Naive thymus-derived CD4-positive, alpha-beta T cell (primary cell): ENCODE measurements at regions of chr2 and their contacts with region 1.

Region 1: DNA sequence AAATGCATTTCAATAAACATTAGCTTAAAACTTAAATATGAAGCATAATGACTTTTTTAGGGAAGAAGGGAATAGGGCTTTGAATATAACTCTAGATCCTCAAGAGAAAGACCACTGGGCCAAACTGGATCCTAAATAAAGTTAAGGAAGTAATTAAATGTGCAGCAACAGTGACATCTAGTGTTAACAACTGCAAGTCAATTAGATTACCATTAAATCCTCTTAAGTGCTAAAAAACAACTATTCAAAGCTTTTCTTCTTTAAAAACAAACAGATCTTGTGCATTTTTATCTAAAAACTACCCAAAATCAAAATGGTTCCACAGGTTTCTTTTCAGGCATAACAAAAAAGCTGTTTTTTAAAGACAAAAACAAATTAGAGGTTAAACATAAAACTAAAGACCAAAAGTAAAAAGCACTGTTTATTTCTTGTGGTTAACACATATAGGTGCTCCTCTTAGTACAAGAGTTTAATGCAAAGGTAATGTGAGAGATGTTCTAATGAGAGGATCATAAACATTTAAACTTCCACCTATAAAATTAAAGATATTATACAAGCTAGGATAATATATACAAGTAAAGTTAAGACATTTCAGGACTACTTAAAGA is 111.4 kb downstream of the THADA start:
- DNase-seq: peak in 7 of 9 donors; percentile 15 to 56 (median 47)
- ATAC-seq: peak; percentile 58
- H3K4me3 ChIP-seq: no peak overlapping the region
- H3K4me3 Mint-ChIP-seq: no peak overlapping the region
- H3K27ac ChIP-seq: no peak overlapping the region
- H3K27ac Mint-ChIP-seq: no peak overlapping the region
- H3K4me1 ChIP-seq: peaks cover 0 to 21% of the 10 kb centered on the region in 2 donors
- H3K4me1 Mint-ChIP-seq: peaks cover 0 to 15% (median 0%) of the 10 kb centered on the region in 7 donors
- H3K27me3 ChIP-seq: no peaks in the 10 kb centered on the region
- H3K27me3 Mint-ChIP-seq: no peaks in the 10 kb centered on the region

Region 2: DNA sequence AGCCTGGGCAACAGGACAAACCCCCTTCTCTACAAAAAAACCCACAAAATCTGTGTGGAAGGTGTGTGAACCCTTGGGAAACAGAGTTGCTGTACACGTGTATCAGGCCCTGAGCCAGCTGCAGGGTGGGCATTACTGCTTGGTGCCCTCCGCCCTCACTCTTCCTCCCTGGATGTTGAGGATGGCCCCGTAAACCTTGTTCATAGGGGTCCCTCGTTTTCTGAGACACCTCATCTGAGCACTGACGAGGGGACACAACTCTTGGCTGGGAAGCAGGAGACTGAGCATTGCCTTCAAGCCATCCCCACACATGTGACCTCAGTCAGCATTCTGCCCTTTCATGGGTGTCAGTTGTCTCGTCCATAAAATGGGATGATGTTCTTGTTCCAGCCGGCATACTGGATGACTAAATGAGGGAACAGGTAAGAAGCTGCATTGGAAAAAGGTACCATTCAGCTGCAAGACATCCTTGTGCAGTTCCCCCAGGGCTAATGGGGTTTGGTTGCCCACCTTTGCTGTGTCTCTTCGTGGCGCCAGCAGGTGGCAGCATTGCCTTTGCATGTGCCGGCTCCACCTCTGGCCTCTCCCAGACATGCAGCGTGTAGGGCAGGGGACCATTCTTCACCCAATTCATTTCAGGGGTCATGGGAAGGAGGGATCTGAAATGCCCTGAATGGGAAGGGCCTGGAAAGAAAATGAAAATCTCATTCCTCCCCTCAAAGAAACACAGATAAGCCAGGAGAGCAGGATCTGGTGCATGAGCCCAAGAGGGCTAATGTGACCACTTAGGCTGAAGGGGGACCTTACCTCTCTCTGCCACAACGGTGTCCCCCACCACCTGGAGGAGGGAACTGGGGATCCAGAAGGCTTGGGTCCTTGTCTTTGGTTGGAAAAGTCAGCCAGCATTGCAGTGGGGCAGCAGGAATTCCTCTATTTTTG is 655.7 kb before region 1 on chr2:
- CTCF ChIA-PET with region 1: interaction called, 10 read pairs
- POLR2A ChIA-PET with region 1: no interaction called
- intact Hi-C with region 1: loop called (anchors 1 to 5 kb)
- DNase-seq: peak; percentile 44 to 69 (median 63)
- ATAC-seq: peak; percentile 93
- H3K4me3 ChIP-seq: no peak overlapping the region
- H3K4me3 Mint-ChIP-seq: peak overlapping the region in 6 of 10 donors; percentile 18 to 47 (median 21)
- H3K27ac ChIP-seq: no peak overlapping the region
- H3K27ac Mint-ChIP-seq: peak overlapping the region in 2 of 9 donors; percentile 21 to 25
- H3K4me1 ChIP-seq: peaks cover 3 to 6% of the 10 kb centered on the region in 2 donors
- H3K4me1 Mint-ChIP-seq: peaks cover 7 to 19% (median 14%) of the 10 kb centered on the region in 7 donors
- H3K27me3 ChIP-seq: no peaks in the 10 kb centered on the region
- H3K27me3 Mint-ChIP-seq: peaks cover 0 to 8% (median 5%) of the 10 kb centered on the region in 5 donors

Region 3: DNA sequence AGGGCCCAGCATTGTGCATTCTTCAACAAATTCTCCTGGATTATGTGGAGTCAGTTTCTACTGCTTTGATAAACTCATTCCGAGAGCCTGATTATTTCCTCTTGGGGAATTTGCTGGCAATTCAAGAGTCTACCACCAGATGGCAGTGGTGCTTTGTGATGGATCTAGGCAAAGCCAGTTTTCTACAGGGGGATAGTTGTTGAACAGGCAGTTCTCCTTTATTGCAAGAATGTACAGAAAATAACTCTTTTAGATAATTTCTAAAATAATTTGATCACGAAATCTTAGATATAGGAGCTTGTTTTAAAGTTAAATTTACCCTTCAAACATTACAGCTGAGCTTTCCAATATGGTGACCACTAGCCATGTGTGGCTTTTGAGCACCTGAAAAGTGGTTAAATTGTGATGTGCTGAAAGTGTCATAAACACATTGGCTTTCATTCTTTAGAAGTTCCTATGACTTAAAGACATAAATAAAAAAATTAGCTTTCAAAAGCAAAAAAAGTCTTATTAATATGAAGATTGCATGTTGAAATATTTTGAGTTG is 625.3 kb before region 1 on chr2:
- CTCF ChIA-PET with region 1: interaction called, 13 read pairs
- POLR2A ChIA-PET with region 1: no interaction called
- intact Hi-C with region 1: loop called (anchors 1 to 2 kb)
- DNase-seq: peak; percentile 15 to 75 (median 58)
- ATAC-seq: peak; percentile 72
- H3K4me3 ChIP-seq: no peak overlapping the region
- H3K4me3 Mint-ChIP-seq: no peak overlapping the region
- H3K27ac ChIP-seq: no peak overlapping the region
- H3K27ac Mint-ChIP-seq: no peak overlapping the region
- H3K4me1 ChIP-seq: no peaks in the 10 kb centered on the region
- H3K4me1 Mint-ChIP-seq: peaks cover 0 to 4% (median 0%) of the 10 kb centered on the region in 7 donors
- H3K27me3 ChIP-seq: no peaks in the 10 kb centered on the region
- H3K27me3 Mint-ChIP-seq: peaks cover 0 to 3% (median 0%) of the 10 kb centered on the region in 5 donors

Region 4: DNA sequence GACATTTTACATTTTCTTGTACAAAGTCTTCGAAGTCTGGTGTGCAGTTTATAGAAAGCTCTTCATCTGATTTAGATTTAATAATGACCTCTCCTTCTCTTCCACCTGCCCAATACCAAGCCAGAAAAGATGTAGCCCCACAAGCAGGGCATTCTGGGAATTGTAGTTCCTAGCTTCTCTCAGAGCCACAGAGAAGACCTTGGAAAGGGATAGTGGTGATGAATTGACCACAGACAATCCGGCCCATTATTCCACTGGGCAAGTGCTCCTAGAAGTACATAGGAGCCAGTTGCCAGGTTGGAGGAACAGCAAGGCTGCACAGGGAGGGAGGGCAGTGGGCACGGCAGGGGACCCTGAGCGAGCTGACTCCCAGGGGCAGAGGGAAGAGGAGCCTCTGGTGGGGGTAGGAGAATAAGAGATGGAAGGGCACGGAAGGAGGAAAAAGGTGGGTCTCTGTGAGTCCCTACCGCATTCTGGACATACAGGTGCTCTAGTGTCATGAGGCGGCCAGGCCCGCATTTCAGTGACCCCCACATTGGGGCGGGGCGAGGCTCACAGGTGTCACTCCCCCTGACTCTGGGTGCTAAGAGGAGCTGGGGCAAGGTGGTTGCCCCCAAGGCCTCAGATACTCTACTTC is 539.5 kb before region 1 on chr2:
- CTCF ChIA-PET with region 1: interaction called, 57 read pairs
- POLR2A ChIA-PET with region 1: interaction called, 4 read pairs
- intact Hi-C with region 1: loop called (anchors 1 kb)
- DNase-seq: no peak
- ATAC-seq: no peak
- H3K4me3 ChIP-seq: no peak overlapping the region
- H3K4me3 Mint-ChIP-seq: no peak overlapping the region
- H3K27ac ChIP-seq: no peak overlapping the region
- H3K27ac Mint-ChIP-seq: no peak overlapping the region
- H3K4me1 ChIP-seq: no peaks in the 10 kb centered on the region
- H3K4me1 Mint-ChIP-seq: peaks cover 0 to 7% (median 5%) of the 10 kb centered on the region in 7 donors
- H3K27me3 ChIP-seq: no peaks in the 10 kb centered on the region
- H3K27me3 Mint-ChIP-seq: peaks cover 0 to 8% (median 0%) of the 10 kb centered on the region in 5 donors

Region 5: GRCh38 chr2:42974721-42975717 is 509.4 kb before region 1 on chr2:
- CTCF ChIA-PET with region 1: interaction called, 8 read pairs
- POLR2A ChIA-PET with region 1: no interaction called
- intact Hi-C with region 1: loop called (anchors 1 kb)
- DNase-seq: peak; percentile 25 to 64 (median 47)
- ATAC-seq: peak; percentile 70
- H3K4me3 ChIP-seq: no peak overlapping the region
- H3K4me3 Mint-ChIP-seq: no peak overlapping the region
- H3K27ac ChIP-seq: no peak overlapping the region
- H3K27ac Mint-ChIP-seq: peak overlapping the region in 3 of 9 donors; percentile 25 to 74 (median 41)
- H3K4me1 ChIP-seq: peaks cover 0 to 6% of the 10 kb centered on the region in 2 donors
- H3K4me1 Mint-ChIP-seq: peaks cover 12 to 19% (median 16%) of the 10 kb centered on the region in 7 donors
- H3K27me3 ChIP-seq: no peaks in the 10 kb centered on the region
- H3K27me3 Mint-ChIP-seq: peaks cover 0 to 10% (median 0%) of the 10 kb centered on the region in 5 donors

Region 6: GRCh38 chr2:43024515-43025011 is 459.9 kb before region 1 on chr2:
- CTCF ChIA-PET with region 1: no interaction called
- POLR2A ChIA-PET with region 1: no interaction called
- intact Hi-C with region 1: loop called in 1 of 2 experiments (anchors 1 kb)
- DNase-seq: peak in 5 of 9 donors; percentile 21 to 43 (median 25)
- ATAC-seq: peak; percentile 65
- H3K4me3 ChIP-seq: no peak overlapping the region
- H3K4me3 Mint-ChIP-seq: peak overlapping the region in 4 of 10 donors; percentile 1 to 63 (median 31)
- H3K27ac ChIP-seq: no peak overlapping the region
- H3K27ac Mint-ChIP-seq: peak overlapping the region in 7 of 9 donors; percentile 25 to 92 (median 47)
- H3K4me1 ChIP-seq: peaks cover 0 to 9% of the 10 kb centered on the region in 2 donors
- H3K4me1 Mint-ChIP-seq: peaks cover 0 to 50% (median 34%) of the 10 kb centered on the region in 7 donors
- H3K27me3 ChIP-seq: no peaks in the 10 kb centered on the region
- H3K27me3 Mint-ChIP-seq: peaks cover 0 to 9% (median 0%) of the 10 kb centered on the region in 5 donors

Region 7: GRCh38 chr2:43348908-43349661 is 135.3 kb before region 1 on chr2:
- CTCF ChIA-PET with region 1: no interaction called
- POLR2A ChIA-PET with region 1: no interaction called
- intact Hi-C with region 1: no loop called
- DNase-seq: no peak
- ATAC-seq: no peak
- H3K4me3 ChIP-seq: no peak overlapping the region
- H3K4me3 Mint-ChIP-seq: no peak overlapping the region
- H3K27ac ChIP-seq: no peak overlapping the region
- H3K27ac Mint-ChIP-seq: peak overlapping the region in 1 of 9 donors; percentile 51
- H3K4me1 ChIP-seq: no peaks in the 10 kb centered on the region
- H3K4me1 Mint-ChIP-seq: peaks cover 0 to 6% (median 0%) of the 10 kb centered on the region in 7 donors
- H3K27me3 ChIP-seq: no peaks in the 10 kb centered on the region
- H3K27me3 Mint-ChIP-seq: no peaks in the 10 kb centered on the region

Region 8: GRCh38 chr2:43542285-43542937 is 58.0 kb after region 1 on chr2:
- CTCF ChIA-PET with region 1: interaction called, 3 read pairs
- POLR2A ChIA-PET with region 1: no interaction called
- intact Hi-C with region 1: loop called (anchors 2 kb)
- DNase-seq: peak in 7 of 9 donors; percentile 43 to 70 (median 48)
- ATAC-seq: peak; percentile 82
- H3K4me3 ChIP-seq: no peak overlapping the region
- H3K4me3 Mint-ChIP-seq: no peak overlapping the region
- H3K27ac ChIP-seq: no peak overlapping the region
- H3K27ac Mint-ChIP-seq: no peak overlapping the region
- H3K4me1 ChIP-seq: peaks cover 0 to 3% of the 10 kb centered on the region in 2 donors
- H3K4me1 Mint-ChIP-seq: peaks cover 9 to 18% (median 15%) of the 10 kb centered on the region in 7 donors
- H3K27me3 ChIP-seq: no peaks in the 10 kb centered on the region
- H3K27me3 Mint-ChIP-seq: no peaks in the 10 kb centered on the region

Region 9: DNA sequence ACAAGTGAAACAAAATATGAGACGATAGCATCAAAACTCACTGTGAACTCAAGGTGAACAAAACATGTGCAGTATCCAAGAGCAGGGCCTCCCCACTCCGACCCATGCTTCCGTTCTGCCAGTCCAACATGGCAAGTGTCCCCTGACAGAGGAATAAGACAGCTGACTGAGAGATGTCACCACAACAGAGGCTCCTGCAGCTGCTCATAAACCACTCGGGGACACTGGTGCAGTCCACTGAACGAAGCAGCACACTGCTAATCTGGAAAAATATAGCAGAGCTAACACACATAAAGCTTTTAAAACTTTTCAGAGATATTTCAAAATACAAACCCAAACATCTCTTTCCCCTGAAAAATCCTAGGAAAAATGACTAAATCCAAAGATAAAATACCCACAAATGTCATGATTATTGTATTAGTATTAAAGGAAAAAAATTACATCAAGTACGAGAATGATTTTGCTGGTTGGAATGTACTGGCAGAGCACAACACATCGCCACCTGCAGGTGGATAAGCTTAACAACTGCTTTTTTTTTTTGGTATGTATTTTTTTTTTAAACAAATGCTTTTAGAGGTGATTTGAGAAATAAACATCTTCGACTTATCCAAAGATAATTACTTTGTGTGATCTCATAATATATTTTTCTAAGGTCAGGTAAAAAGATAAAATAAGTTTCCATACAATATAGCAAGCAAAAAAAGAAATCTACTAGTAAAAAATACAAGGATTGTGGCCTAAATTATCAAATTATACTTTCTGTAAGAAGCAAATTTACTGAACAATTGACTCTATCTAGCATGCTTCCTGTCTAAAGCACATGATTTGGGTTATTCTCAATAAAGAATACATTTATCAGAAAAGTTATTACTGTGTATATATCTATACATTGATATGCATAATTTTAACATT is 92.8 kb after region 1 on chr2:
- CTCF ChIA-PET with region 1: no interaction called
- POLR2A ChIA-PET with region 1: no interaction called
- intact Hi-C with region 1: no loop called
- DNase-seq: peak in 7 of 9 donors; percentile 15 to 54 (median 44)
- ATAC-seq: peak; percentile 70
- H3K4me3 ChIP-seq: no peak overlapping the region
- H3K4me3 Mint-ChIP-seq: no peak overlapping the region
- H3K27ac ChIP-seq: no peak overlapping the region
- H3K27ac Mint-ChIP-seq: no peak overlapping the region
- H3K4me1 ChIP-seq: no peaks in the 10 kb centered on the region
- H3K4me1 Mint-ChIP-seq: peaks cover 0 to 12% (median 6%) of the 10 kb centered on the region in 7 donors
- H3K27me3 ChIP-seq: no peaks in the 10 kb centered on the region
- H3K27me3 Mint-ChIP-seq: no peaks in the 10 kb centered on the region

Region 10: DNA sequence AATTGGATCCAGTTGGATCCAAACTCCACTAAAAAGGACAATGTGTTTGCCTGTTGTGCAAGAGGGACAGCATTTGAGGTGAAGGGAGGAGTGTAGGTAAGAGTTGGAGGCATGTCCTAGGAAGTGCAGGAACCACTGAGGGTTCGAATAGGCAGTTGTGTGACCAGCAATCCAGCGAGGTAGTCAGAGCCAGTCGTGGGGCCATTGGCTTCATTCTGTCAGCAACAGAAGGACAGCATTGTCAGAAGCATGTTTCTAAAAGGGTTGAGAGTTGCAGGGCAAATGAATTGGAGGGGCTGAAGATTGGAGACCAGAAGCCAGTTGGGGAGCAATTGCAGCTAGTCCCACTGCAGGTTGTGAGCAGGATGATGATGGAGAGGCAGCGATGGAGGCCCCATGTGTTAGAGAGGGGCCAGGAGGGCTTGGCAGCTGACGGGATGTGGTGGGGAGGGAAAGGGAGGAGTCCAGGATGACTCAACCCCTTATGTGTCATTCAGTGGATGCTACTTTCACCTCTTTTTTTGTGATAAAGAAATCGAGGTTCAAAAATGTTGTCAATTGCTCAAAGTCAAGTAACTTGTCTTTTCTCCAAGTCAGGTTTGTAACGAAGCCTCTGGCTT is 1360.3 kb after region 1 on chr2:
- CTCF ChIA-PET with region 1: no interaction called
- POLR2A ChIA-PET with region 1: no interaction called
- intact Hi-C with region 1: no loop called
- DNase-seq: no peak
- ATAC-seq: no peak
- H3K4me3 ChIP-seq: no peak overlapping the region
- H3K4me3 Mint-ChIP-seq: no peak overlapping the region
- H3K27ac ChIP-seq: no peak overlapping the region
- H3K27ac Mint-ChIP-seq: no peak overlapping the region
- H3K4me1 ChIP-seq: no peaks in the 10 kb centered on the region
- H3K4me1 Mint-ChIP-seq: peaks cover 0 to 9% (median 2%) of the 10 kb centered on the region in 7 donors
- H3K27me3 ChIP-seq: no peaks in the 10 kb centered on the region
- H3K27me3 Mint-ChIP-seq: peaks cover 14 to 40% (median 28%) of the 10 kb centered on the region in 5 donors